Posterior cingulate gyrus (tissue), 11 donors: ENCODE measurements at regions of chr17 and their contacts with region 1.

Region 1: DNA sequence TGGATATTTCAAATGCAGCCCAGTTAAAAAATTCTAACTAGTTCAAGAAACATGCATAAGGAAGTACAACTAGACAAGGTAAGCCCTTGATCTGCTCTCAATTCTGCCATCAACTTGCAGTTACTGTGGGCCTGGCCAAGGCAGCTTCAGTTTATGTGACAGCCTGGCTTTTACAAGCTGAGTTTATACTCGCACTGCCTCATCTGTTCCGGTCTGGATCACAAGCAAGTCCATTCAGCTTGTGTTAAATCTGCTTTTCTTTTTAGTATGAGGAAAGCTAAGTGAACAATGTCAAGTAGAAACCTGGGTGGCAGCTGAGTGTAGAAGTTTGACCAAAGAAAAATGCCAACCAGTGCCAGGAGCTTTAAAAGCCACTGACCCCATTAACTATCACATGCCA is 76.6 kb upstream of the CORO6 start:
- DNase-seq: peak in 1 of 10 donors; percentile 34

Region 2: DNA sequence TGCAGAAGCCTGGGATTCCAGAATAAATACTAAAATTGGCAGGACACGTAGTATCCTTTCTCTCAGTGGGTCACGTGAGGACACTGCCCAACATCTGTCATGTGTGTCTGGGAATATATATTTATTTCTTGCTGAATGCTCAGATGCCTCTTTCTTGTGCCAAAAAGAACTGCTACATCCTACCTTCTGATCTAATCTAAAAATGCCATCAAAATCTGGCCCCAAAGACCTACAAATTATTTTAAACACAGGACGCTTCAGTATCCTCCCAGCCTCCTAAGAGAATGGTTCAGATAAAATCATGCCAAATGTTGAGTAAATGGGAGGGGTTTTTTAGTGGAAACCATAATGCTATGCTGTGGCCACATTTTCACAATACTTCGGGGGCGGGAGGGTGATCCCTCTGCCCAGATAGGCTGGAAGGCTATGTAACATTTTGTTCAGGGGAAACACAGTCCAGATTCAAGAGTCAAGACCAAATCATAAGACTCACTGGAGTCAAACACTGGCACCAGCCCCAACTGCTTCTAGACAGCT is 53.7 kb before region 1 on chr17:
- intact Hi-C with region 1: loop called (anchors 10 kb)
- DNase-seq: peak in 3 of 10 donors; percentile 34 to 75 (median 38)